ENCODE measurements at regions of chr3 and their contacts with region 1.

Region 1: DNA sequence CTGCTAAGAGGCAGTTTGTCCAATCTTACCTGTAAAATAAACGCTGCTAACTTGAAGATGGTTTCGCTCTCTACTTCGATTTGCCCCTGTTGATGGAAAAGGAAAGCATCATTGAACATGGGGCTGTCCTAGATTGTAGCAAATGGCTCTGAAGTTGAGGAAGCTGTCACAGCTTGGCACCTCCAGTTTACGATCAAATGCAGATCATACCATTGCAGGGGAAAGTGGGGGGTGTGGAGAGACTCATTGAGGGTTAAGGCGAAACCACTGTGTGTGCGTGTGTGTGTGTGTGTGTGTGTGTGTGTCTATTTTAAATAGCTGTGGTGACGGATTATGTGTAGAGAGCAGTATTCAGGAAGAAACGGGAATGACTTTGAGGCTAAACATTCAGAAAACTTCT is 127.6 kb upstream of the LMOD3 start:
- DNase-seq: peak; percentile 86
- H3K4me3 Mint-ChIP-seq: peak overlapping the region; percentile 54
- H3K27ac Mint-ChIP-seq: peak overlapping the region; percentile 7
- H3K4me1 Mint-ChIP-seq: peaks cover 13% of the 10 kb centered on the region
- H3K27me3 Mint-ChIP-seq: no peaks in the 10 kb centered on the region

Region 2: DNA sequence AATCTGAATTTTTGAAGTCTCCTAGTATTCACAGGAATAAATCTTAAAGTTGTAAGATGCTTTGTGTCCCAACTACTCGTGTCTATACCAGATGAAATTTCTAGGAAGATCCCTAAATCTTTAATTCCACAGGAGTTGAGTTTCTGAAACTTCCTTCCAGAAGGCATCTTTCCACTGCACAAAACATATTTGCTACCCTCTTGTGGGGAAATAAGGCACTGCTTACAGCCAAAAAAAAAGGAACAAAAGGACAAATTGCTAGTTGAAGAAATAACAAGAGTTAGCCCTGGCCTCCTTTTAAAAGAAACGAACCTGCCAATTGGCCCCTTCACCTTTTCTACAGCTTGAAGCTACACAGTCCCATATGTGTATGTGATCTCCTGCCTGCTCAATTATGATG is 371.7 kb before region 1 on chr3:
- CTCF ChIA-PET with region 1: no interaction called
- intact Hi-C with region 1: no loop called
- DNase-seq: no peak
- H3K4me3 Mint-ChIP-seq: no peak overlapping the region
- H3K27ac Mint-ChIP-seq: no peak overlapping the region
- H3K4me1 Mint-ChIP-seq: no peaks in the 10 kb centered on the region
- H3K27me3 Mint-ChIP-seq: peaks cover 5% of the 10 kb centered on the region

Region 3: DNA sequence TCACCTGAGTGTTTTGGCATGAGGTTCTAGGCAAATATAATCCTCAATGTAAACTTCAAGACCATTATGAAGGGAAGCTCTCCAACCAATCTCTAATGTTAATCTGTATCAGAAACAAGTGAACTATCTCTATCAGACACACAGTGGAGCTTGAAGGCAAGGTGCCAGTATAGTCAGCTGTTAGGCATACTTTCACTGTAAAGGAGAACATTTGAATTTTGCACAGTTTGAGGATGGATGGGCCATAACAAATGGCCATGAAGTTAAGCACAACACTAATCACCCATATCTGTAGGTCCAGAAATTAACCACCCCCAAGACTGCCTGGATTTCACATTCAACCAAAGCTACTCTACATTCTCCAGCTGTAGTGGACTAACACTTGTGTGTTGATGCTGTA is 58.5 kb before region 1 on chr3:
- CTCF ChIA-PET with region 1: no interaction called
- intact Hi-C with region 1: no loop called
- DNase-seq: no peak
- H3K4me3 Mint-ChIP-seq: no peak overlapping the region
- H3K27ac Mint-ChIP-seq: no peak overlapping the region
- H3K4me1 Mint-ChIP-seq: peaks cover 8% of the 10 kb centered on the region
- H3K27me3 Mint-ChIP-seq: no peaks in the 10 kb centered on the region

Region 4: GRCh38 chr3:69282181-69282580 is 32.2 kb after region 1 on chr3:
- CTCF ChIA-PET with region 1: interaction called, 3 read pairs
- intact Hi-C with region 1: loop called (anchors 2 kb)
- DNase-seq: peak; percentile 84
- H3K4me3 Mint-ChIP-seq: no peak overlapping the region
- H3K27ac Mint-ChIP-seq: peak overlapping the region; percentile 33
- H3K4me1 Mint-ChIP-seq: peaks cover 21% of the 10 kb centered on the region
- H3K27me3 Mint-ChIP-seq: no peaks in the 10 kb centered on the region

Measured in activated naive CD4-positive, alpha-beta T cell treated with anti-CD3 and anti-CD28 coated beads for 36 hours (primary cell).